ENCODE measurements at regions of chr4 and their contacts with region 1.

Region 1: DNA sequence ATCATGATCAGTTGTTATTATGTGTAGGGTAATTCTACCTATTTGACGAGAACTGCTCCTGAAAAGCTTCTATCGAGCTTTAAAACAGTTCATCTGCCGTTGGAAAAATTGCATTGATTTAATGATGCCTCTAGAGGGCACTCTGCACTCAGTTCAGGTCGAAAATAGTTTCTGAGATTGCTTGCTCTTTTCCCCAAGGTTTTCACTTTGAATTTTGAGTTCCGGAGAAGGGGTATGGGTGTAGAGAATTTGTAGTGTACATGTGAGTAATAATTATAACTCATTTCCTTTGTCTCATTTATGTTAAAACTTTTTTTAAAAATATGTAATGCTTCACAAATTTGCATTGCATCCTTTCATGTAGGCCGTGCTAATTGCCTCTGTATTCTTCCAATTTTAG is 28.4 kb upstream of the TNIP3 start:
- DNase-seq: peak; percentile 35
- H3K4me3 ChIP-seq: peak overlapping the region in 2 of 3 experiments; percentile 2 to 31
- H3K27ac ChIP-seq: no peak overlapping the region
- H3K4me1 ChIP-seq: peaks cover 5% of the 10 kb centered on the region
- H3K27me3 ChIP-seq: peaks cover 3% of the 10 kb centered on the region
- CTCF ChIP-seq: peak; percentile 74 to 79

Region 2: DNA sequence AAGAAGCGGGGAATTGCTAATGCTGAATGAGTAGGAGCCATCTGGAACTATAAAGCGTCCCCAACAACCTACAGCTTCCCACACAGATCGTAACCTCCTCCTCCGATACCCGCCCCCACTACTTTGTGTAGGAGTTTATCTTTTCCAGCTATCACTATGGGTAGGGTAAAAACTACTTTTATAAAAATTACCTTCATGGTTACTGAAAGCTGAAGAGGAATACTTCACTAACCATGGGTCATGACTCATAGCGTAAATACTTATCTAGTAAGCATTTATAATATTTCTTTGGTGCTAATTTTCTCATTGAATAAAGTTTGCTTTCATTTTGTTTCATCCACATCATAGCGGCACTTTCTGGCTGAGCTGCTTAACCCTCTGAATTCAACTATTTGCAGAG is 51.0 kb after region 1 on chr4:
- CTCF ChIA-PET with region 1: interaction called, 11 read pairs
- dilution Hi-C with region 1: loop called (anchors 5 kb)
- in situ Hi-C with region 1: no loop called
- intact Hi-C with region 1: no loop called
- DNase-seq: no peak
- H3K4me3 ChIP-seq: no peak overlapping the region
- H3K27ac ChIP-seq: no peak overlapping the region
- H3K4me1 ChIP-seq: no peaks in the 10 kb centered on the region
- H3K27me3 ChIP-seq: no peaks in the 10 kb centered on the region
- CTCF ChIP-seq: no peak

Region 3: DNA sequence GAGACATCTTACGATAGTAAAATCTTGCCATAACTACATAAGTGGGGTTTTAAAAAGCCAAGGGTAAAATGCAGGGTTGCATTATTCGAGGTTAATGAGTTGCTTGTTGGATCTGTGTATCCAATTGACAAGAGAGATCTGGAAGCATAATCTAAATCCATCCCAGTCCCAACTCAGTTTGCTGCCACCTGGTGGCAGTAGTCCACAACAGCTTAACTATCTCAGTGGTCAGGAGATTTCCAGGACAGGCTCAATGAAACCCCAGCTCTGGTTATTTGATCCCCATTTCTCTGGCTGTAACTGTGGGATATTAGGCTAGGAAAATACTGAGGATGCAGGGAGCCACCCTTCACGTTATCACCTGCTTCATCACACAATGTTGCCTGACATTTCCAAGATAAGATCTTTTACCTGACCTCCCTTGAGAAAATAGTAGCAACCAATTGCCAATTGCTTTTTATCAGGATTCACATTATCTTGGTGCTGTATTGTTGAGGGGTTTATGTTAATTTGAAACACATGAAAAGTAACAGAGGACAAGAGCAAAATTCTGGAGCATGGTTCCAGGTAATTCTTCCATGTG is 59.8 kb after region 1 on chr4:
- CTCF ChIA-PET with region 1: interaction called, 5 read pairs
- dilution Hi-C with region 1: no loop called
- in situ Hi-C with region 1: no loop called
- intact Hi-C with region 1: loop called (anchors 1 kb)
- DNase-seq: peak; percentile 55
- H3K4me3 ChIP-seq: no peak overlapping the region
- H3K27ac ChIP-seq: no peak overlapping the region
- H3K4me1 ChIP-seq: peaks cover 15% of the 10 kb centered on the region
- H3K27me3 ChIP-seq: no peaks in the 10 kb centered on the region
- CTCF ChIP-seq: peak; percentile 90

Region 4: GRCh38 chr4:121421594-121421993 is 229.1 kb after region 1 on chr4:
- CTCF ChIA-PET with region 1: no interaction called
- dilution Hi-C with region 1: no loop called
- in situ Hi-C with region 1: no loop called
- intact Hi-C with region 1: loop called (anchors 1 kb)
- DNase-seq: no peak
- H3K4me3 ChIP-seq: no peak overlapping the region
- H3K27ac ChIP-seq: no peak overlapping the region
- H3K4me1 ChIP-seq: no peaks in the 10 kb centered on the region
- H3K27me3 ChIP-seq: peaks cover 4% of the 10 kb centered on the region
- CTCF ChIP-seq: peak; percentile 58 to 59

Region 5: GRCh38 chr4:121736735-121737351 is 544.4 kb after region 1 on chr4:
- CTCF ChIA-PET with region 1: no interaction called
- dilution Hi-C with region 1: no loop called
- in situ Hi-C with region 1: no loop called
- intact Hi-C with region 1: loop called (anchors 5 kb)
- DNase-seq: peak; percentile 47
- H3K4me3 ChIP-seq: no peak overlapping the region
- H3K27ac ChIP-seq: no peak overlapping the region
- H3K4me1 ChIP-seq: no peaks in the 10 kb centered on the region
- H3K27me3 ChIP-seq: no peaks in the 10 kb centered on the region
- CTCF ChIP-seq: peak; percentile 59 to 67